ENCODE measurements at regions of chr2 and their contacts with region 1.

Region 1: DNA sequence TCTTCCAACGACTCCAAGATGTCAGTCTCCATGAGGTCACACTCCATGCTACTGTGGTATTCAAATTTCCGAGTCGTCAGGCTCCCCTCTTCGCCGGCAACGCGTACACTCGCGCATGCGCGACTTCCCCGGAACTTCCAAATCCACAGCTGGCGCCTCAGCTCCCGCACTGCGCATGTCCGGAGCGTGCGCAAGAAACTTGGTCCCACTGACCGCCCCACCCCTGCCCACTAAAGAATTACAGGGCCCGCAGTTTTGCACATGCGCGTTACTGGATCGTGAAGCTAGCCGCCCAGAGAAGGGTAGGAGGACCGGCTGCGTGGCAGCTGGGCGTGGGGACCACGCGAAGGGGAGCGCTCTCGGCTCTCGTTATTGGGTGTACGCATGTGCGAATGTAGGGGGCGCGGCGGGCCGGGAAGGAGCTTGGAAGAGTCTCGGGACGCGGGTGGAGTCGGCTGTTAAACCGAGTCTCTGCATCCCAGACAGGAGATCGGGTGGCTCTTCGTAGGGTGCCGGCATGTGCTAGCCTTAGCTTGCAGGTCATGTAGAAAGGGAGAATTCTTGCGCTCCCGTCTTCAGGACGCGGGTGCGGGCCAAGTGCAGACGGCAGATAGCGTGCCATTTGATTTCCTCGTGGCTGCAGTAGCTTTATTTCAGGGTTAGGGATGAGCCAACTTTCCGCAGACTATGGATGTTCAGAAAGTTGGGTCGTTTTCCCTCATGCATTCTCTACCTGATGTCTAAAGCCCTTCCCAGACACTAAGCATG is at the start of gene FAM98A:
- DNase-seq: peak; percentile 93 to 100 (median 97)
- ATAC-seq: peak; percentile 92 to 97 (median 96)
- H3K4me3 ChIP-seq: peak within 1 kb of the TSS; percentile 84 to 95
- H3K4me3 Mint-ChIP-seq: peak within 1 kb of the TSS; percentile 90 to 100 (median 92)
- H3K27ac ChIP-seq: peak within 1 kb of the TSS; percentile 72
- H3K27ac Mint-ChIP-seq: peak within 1 kb of the TSS; percentile 91 to 99
- H3K4me1 ChIP-seq: peaks cover 9 to 13% of the 10 kb centered on the region in 2 experiments
- H3K4me1 Mint-ChIP-seq: peaks cover 34 to 45% (median 40%) of the 10 kb centered on the region in 3 donors
- H3K27me3 ChIP-seq: no peaks in the 10 kb centered on the region
- H3K27me3 Mint-ChIP-seq: no peaks in the 10 kb centered on the region
- total RNA-seq, gene FAM98A: 16.1 to 36.2 (median 34.5) TPM

Region 2: GRCh38 chr2:33583194-33583938 is 16.0 kb before region 1 on chr2:
- CTCF ChIA-PET with region 1: interaction called, 4 to 31 read pairs
- POLR2A ChIA-PET with region 1: interaction called in 1 of 2 experiments, 7 read pairs
- DNase-seq: peak in 17 of 35 experiments; percentile 4 to 67 (median 16)
- ATAC-seq: peak in 2 of 4 experiments; percentile 36 to 55
- H3K4me3 ChIP-seq: no peak overlapping the region
- H3K4me3 Mint-ChIP-seq: no peak overlapping the region
- H3K27ac ChIP-seq: no peak overlapping the region
- H3K27ac Mint-ChIP-seq: peak overlapping the region in 1 of 2 donors; percentile 76
- H3K4me1 ChIP-seq: peaks cover 0 to 9% of the 10 kb centered on the region in 2 experiments
- H3K4me1 Mint-ChIP-seq: peaks cover 6 to 12% (median 9%) of the 10 kb centered on the region in 3 donors
- H3K27me3 ChIP-seq: no peaks in the 10 kb centered on the region
- H3K27me3 Mint-ChIP-seq: no peaks in the 10 kb centered on the region